H1 (cell line): ENCODE measurements at regions of chr6 and their contacts with region 1.

Region 1: GRCh38 chr6:31128093-31128676 is 7.9 kb upstream of the CDSN start:
- DNase-seq: peak in 1 of 2 experiments; percentile 95
- H3K4me3 ChIP-seq: no peak overlapping the region
- H3K27ac ChIP-seq: no peak overlapping the region
- H3K4me1 ChIP-seq: peaks cover 0 to 3% (median 3%) of the 10 kb centered on the region in 4 experiments; a peak in 3 of 7 replicates
- H3K27me3 ChIP-seq: no peaks in the 10 kb centered on the region; a peak in 1 of 7 replicates
- CTCF ChIP-seq: peak; percentile 60 to 86 (median 83)
- EP300 ChIP-seq: no peak
- POLR2A ChIP-seq: no peak
- RAD21 ChIP-seq: peak; percentile 53 to 70

Region 2: DNA sequence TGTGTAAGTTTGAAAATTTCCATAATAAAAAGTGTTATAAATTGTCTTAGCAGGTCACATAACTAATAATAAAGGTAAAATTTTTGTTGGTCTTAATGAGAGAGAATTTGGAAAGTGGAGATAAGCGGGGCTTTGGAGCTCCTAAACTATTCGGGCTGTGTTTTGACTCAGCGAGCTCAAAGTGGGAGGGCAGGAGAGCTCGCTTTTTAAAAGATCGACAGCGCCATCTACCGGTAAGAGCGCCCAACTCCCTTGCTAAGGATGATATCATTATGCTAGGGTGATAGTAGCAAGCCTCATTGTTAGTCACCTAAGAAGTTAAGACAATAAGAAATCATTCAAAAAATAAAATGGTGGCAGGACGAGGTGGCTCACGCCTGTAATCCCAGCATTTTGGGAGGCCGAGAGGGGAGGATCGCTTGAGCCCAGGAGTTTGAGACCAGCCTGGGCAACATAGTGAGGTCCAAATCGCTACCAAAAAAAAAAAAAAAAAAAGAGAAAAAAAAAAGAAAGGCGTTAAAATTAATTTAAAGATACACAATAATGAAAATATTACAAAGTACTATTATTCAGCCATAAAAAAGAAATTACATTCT is 40.6 kb before region 1 on chr6:
- CTCF ChIA-PET with region 1: interaction called, 48 read pairs
- POLR2A ChIA-PET with region 1: no interaction called
- DNase-seq: peak in 1 of 2 experiments; percentile 87
- H3K4me3 ChIP-seq: no peak overlapping the region
- H3K27ac ChIP-seq: no peak overlapping the region
- H3K4me1 ChIP-seq: no peaks in the 10 kb centered on the region; a peak in 1 of 7 replicates
- H3K27me3 ChIP-seq: no peaks in the 10 kb centered on the region
- CTCF ChIP-seq: peak; percentile 47 to 70 (median 67)
- EP300 ChIP-seq: no peak
- POLR2A ChIP-seq: no peak
- RAD21 ChIP-seq: peak; percentile 81 to 83

Region 3: DNA sequence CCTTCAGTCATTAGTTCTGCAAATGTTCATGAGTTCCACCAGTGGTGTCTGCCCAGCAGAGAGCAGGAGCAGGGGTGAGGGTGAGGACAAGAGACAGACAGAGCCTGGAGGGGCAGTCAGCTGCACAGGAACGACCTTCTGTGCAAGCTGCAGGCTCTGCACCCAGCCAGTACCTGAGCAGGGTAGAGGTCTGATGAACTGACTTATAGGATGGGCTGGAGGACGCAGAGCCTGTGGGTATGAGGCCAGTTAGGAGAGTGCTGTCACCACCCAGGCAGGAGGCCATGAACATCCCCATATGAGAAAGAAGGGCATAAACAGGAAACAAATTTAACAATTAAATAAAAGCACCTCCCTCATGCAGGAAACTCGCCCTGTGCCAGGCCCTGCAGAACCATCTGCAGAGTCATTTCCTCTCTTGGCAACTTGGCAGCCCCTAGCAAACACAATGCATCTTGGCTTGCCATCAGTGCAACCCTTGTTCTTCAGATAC is 33.8 kb before region 1 on chr6:
- CTCF ChIA-PET with region 1: interaction called, 16 read pairs
- POLR2A ChIA-PET with region 1: no interaction called
- DNase-seq: no peak
- H3K4me3 ChIP-seq: no peak overlapping the region
- H3K27ac ChIP-seq: no peak overlapping the region
- H3K4me1 ChIP-seq: peaks cover 0 to 3% (median 0%) of the 10 kb centered on the region in 4 experiments; a peak in 3 of 7 replicates
- H3K27me3 ChIP-seq: no peaks in the 10 kb centered on the region
- CTCF ChIP-seq: no peak
- EP300 ChIP-seq: no peak
- POLR2A ChIP-seq: no peak
- RAD21 ChIP-seq: no peak

Region 4: GRCh38 chr6:31103136-31103535 is 25.0 kb before region 1 on chr6:
- CTCF ChIA-PET with region 1: interaction called, 26 read pairs
- POLR2A ChIA-PET with region 1: no interaction called
- DNase-seq: no peak
- H3K4me3 ChIP-seq: no peak overlapping the region
- H3K27ac ChIP-seq: no peak overlapping the region
- H3K4me1 ChIP-seq: no peaks in the 10 kb centered on the region
- H3K27me3 ChIP-seq: no peaks in the 10 kb centered on the region
- CTCF ChIP-seq: no peak
- EP300 ChIP-seq: no peak
- POLR2A ChIP-seq: no peak
- RAD21 ChIP-seq: no peak

Region 5: GRCh38 chr6:31114970-31115849 is 13.0 kb before region 1 on chr6:
- CTCF ChIA-PET with region 1: interaction called, 187 read pairs
- POLR2A ChIA-PET with region 1: interaction called, 4 read pairs
- DNase-seq: no peak
- H3K4me3 ChIP-seq: no peak overlapping the region
- H3K27ac ChIP-seq: no peak overlapping the region
- H3K4me1 ChIP-seq: peaks cover 0 to 19% (median 9%) of the 10 kb centered on the region in 4 experiments; a peak in 6 of 7 replicates
- H3K27me3 ChIP-seq: peaks cover 0 to 9% (median under 1%) of the 10 kb centered on the region in 4 experiments; a peak in 2 of 7 replicates
- CTCF ChIP-seq: peak in 2 of 3 experiments; percentile 12 to 35; a peak in 1 of 4 replicates
- EP300 ChIP-seq: no peak
- POLR2A ChIP-seq: no peak
- RAD21 ChIP-seq: peak in 1 of 2 experiments; percentile 27; a peak in 3 of 4 replicates

Region 6: GRCh38 chr6:31143148-31143547 is 15.0 kb after region 1 on chr6:
- CTCF ChIA-PET with region 1: interaction called, 170 read pairs
- POLR2A ChIA-PET with region 1: interaction called, 2,251 read pairs
- DNase-seq: no peak
- H3K4me3 ChIP-seq: no peak overlapping the region
- H3K27ac ChIP-seq: no peak overlapping the region
- H3K4me1 ChIP-seq: peaks cover 0 to 16% (median 11%) of the 10 kb centered on the region in 4 experiments; a peak in 6 of 7 replicates
- H3K27me3 ChIP-seq: 0 out of 7 replicates have a peak, but pooled peaks cover 0 to 2% (median 0%) of the 10 kb centered on the region in 4 experiments
- CTCF ChIP-seq: no peak
- EP300 ChIP-seq: no peak
- POLR2A ChIP-seq: no peak
- RAD21 ChIP-seq: no peak

Region 7: DNA sequence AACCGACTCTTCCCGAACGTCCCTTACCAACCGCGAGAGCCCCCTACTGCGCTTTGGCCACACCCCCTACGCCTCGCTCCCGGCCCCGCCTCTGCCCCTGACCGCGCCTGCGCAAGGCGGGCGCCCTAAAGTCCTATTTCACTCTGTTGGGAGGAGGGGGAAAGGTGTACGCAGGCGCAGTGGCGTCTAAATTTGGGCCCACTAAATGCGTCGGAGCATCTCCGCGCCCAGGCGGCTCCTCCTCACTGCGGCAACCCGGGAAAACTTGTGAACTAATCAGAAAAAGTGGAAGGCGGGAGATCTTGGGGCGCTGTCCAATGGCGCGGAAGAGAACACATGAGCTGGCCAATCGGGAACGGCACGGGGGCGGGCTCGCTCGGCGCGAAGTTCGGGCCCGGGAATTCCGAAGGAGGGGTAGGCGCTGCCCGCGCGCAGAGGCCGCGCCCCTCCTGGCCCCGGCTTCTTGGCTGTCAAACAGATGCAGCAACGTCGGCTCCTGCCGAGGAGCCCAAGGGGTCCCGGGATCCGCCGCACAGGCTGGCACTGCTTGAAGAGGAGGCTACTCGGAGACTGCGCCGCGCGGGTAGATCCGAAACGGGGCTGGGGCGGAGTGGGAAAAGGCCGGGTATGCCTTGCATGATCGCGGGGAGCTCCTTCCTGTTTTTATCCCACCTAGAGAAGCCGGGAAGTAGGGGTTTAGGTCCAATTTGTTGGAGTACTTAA is 30.1 kb after region 1 on chr6 and contains the start of gene TCF19:
- CTCF ChIA-PET with region 1: interaction called, 12 read pairs
- POLR2A ChIA-PET with region 1: interaction called, 2,251 read pairs
- DNase-seq: peak; percentile 97 to 99
- H3K4me3 ChIP-seq: peak within 1 kb of the TSS; percentile 62 to 76 (median 68)
- H3K27ac ChIP-seq: no peak within 1 kb of the TSS; the same call in 1 of the 2 replicates
- H3K4me1 ChIP-seq: peaks cover 0 to 24% (median 18%) of the 10 kb centered on the region in 4 experiments; a peak in 6 of 7 replicates
- H3K27me3 ChIP-seq: no peaks in the 10 kb centered on the region
- CTCF ChIP-seq: no peak
- EP300 ChIP-seq: no peak
- POLR2A ChIP-seq: no peak
- RAD21 ChIP-seq: no peak
- total RNA-seq, gene TCF19: 10.0 and 11.0 TPM in 2 replicates